ENCODE measurements at regions of chr3 and their contacts with region 1.

Region 1: DNA sequence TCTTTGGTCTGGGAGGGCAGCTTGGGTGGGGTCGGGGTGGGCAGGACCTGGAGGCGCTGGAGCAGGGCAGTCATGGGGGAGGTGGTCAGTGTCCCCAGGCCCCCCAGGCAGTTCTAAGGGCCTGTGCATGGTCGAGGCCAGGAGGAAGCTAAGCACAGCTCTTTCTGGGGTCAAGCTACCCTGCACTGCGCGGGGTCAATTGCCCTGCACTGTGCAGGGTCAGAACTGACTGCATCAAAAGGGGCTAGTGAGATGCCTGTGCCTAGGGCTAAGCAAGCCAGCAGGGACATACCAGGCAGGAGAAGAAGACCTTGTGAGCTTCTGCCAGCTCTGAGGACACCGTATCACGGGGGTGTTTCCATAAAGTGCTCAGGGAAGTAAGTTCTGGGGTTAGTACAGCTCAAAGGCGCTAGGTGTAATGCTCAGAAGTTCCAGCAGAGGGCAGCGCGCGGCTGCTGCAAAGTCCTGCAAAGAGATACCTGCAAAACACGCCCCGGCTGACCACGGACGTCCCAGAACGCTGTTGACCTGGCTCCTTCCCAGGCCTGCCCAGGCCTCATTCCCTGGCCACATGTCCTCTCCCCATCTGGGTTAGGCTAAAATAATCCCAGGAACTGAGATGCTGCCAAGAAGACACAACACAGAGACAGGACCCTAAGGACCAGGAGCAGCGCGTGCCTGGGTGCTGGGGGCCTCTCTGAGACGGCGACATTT is 18.8 kb upstream of the IQSEC1 start:
- DNase-seq: peak; percentile 86
- H3K4me3 Mint-ChIP-seq: no peak overlapping the region
- H3K27ac Mint-ChIP-seq: no peak overlapping the region
- H3K4me1 Mint-ChIP-seq: no peaks in the 10 kb centered on the region
- H3K27me3 Mint-ChIP-seq: peaks cover 3% of the 10 kb centered on the region

Region 2: DNA sequence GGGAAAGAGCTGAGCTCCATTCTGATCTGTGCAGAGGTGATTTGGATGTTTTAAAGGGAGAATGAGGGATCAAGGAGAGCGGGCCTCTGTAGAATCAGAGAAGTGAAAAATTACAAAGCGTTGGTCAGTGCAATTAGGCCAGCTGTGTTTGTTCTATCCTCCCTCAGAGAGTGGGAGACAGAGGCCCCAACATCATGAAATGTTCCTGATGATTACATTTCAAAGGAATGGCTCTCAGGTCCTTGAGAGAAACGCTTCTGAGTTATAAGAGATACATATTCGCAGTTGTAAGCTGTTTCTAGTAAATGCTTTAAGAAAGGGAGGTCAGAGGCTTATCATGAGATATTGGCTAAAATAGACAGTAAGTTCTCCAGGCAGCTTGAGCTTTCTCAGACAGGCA is 311.3 kb before region 1 on chr3:
- CTCF ChIA-PET with region 1: no interaction called
- POLR2A ChIA-PET with region 1: no interaction called
- intact Hi-C with region 1: no loop called
- DNase-seq: no peak
- H3K4me3 Mint-ChIP-seq: no peak overlapping the region
- H3K27ac Mint-ChIP-seq: no peak overlapping the region
- H3K4me1 Mint-ChIP-seq: no peaks in the 10 kb centered on the region
- H3K27me3 Mint-ChIP-seq: peaks cover 17% of the 10 kb centered on the region

Region 3: GRCh38 chr3:13104510-13104909 is 12.5 kb after region 1 on chr3:
- CTCF ChIA-PET with region 1: interaction called, 28 read pairs
- POLR2A ChIA-PET with region 1: no interaction called
- intact Hi-C with region 1: no loop called
- DNase-seq: no peak
- H3K4me3 Mint-ChIP-seq: no peak overlapping the region
- H3K27ac Mint-ChIP-seq: no peak overlapping the region
- H3K4me1 Mint-ChIP-seq: no peaks in the 10 kb centered on the region
- H3K27me3 Mint-ChIP-seq: peaks cover 2% of the 10 kb centered on the region

Region 4: GRCh38 chr3:13282986-13283876 is 191.2 kb after region 1 on chr3:
- CTCF ChIA-PET with region 1: interaction called, 13 read pairs
- POLR2A ChIA-PET with region 1: no interaction called
- intact Hi-C with region 1: loop called (anchors 10 kb)
- DNase-seq: peak; percentile 25
- H3K4me3 Mint-ChIP-seq: peak overlapping the region; percentile 61
- H3K27ac Mint-ChIP-seq: no peak overlapping the region
- H3K4me1 Mint-ChIP-seq: peaks cover 6% of the 10 kb centered on the region
- H3K27me3 Mint-ChIP-seq: peaks cover 45% of the 10 kb centered on the region

Region 5: GRCh38 chr3:13346481-13347389 is 254.7 kb after region 1 on chr3:
- CTCF ChIA-PET with region 1: interaction called, 14 read pairs
- POLR2A ChIA-PET with region 1: no interaction called
- intact Hi-C with region 1: no loop called
- DNase-seq: peak; percentile 91
- H3K4me3 Mint-ChIP-seq: no peak overlapping the region
- H3K27ac Mint-ChIP-seq: peak overlapping the region; percentile 82
- H3K4me1 Mint-ChIP-seq: peaks cover 56% of the 10 kb centered on the region
- H3K27me3 Mint-ChIP-seq: no peaks in the 10 kb centered on the region

Region 6: DNA sequence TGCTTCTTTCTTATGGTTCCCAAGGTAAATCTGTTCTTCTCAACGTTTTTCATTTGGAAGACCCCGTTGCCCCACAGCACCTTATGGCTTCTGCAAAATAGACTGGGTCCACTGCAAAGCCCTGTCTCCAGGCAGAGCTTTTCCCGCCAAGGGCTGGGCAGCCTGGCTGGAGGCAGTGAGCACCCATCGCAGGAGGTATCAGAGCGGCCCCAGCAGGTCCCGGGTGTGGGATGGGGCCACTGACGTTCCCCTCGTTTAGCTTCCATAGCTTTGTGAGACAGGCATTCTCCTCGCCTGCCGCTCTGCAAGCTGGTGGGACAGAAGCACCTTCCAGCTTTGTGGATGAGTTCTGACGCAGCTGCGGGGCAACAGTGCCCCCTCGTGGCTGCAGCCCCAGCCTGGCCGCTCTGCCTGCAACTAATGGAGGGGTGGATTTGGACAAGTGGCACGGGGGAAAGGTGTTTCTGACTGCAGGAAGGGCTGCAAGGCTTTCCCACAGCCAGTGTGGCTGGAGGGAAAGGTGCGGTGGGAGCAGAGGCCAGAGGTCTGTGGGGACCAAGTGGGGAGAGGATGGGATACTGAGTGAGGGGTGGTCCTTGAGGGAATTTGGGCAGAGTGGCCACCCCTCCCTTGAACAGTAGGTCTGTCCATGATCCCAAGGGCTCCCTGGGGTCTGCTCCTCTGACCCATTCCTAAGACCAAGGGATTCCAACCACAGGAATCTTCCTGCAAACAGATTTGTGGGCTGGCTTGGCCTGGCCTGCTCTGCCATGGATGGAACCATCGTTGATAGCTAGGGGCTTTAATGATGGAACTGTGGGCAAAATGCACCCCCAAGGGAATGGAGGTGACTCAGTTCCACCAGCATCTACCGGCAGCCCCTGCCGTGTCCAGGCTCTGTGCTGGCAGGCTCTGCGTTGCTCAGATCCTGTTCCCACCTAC is 556.3 kb after region 1 on chr3:
- CTCF ChIA-PET with region 1: interaction called, 12 read pairs
- POLR2A ChIA-PET with region 1: no interaction called
- intact Hi-C with region 1: loop called (anchors 2 kb)
- DNase-seq: peak; percentile 84
- H3K4me3 Mint-ChIP-seq: peak overlapping the region; percentile 18
- H3K27ac Mint-ChIP-seq: peak overlapping the region; percentile 14
- H3K4me1 Mint-ChIP-seq: peaks cover 23% of the 10 kb centered on the region
- H3K27me3 Mint-ChIP-seq: peaks cover 8% of the 10 kb centered on the region

Measured in activated CD4-positive, alpha-beta memory T cell treated with anti-CD3 and anti-CD28 coated beads for 36 hours (primary cell).